OCI-LY7 (cell line): ENCODE measurements at regions of chr3 and their contacts with region 1.

Region 1: GRCh38 chr3:42129014-42129953 is 38.1 kb downstream of the TRAK1 start:
- DNase-seq: peak; percentile 66
- H3K4me3 ChIP-seq: peak overlapping the region; percentile 58
- H3K27ac ChIP-seq: peak overlapping the region; percentile 94
- H3K4me1 ChIP-seq: peaks cover 57% of the 10 kb centered on the region
- CTCF ChIP-seq: no peak

Region 2: DNA sequence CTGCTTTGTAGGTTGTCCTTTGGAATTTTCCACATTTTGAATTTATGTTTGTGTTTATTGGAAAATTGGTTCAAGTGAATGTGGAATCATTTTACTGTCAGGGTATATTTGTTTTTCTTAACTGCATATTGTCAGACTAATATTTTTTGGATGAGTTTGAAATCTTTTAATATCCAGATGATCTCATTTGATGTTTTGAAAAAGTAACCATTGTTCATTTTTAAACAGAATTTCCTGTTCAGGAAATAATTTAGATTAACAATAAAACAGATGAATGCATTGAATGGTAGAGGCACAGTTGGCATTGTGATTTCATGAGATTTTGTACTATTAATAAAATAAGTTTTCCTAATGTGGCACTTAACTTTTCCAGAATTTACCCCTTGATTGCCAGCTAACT is 22.6 kb before region 1 on chr3:
- CTCF ChIA-PET with region 1: no interaction called
- POLR2A ChIA-PET with region 1: no interaction called
- intact Hi-C with region 1: no loop called
- DNase-seq: no peak
- H3K4me3 ChIP-seq: no peak overlapping the region
- H3K27ac ChIP-seq: no peak overlapping the region
- H3K4me1 ChIP-seq: no peaks in the 10 kb centered on the region
- CTCF ChIP-seq: no peak

Region 3: GRCh38 chr3:42118762-42119361 is 10.4 kb before region 1 on chr3:
- CTCF ChIA-PET with region 1: interaction called, 4 read pairs
- POLR2A ChIA-PET with region 1: interaction called, 11 read pairs
- intact Hi-C with region 1: no loop called
- DNase-seq: peak; percentile 83
- H3K4me3 ChIP-seq: no peak overlapping the region
- H3K27ac ChIP-seq: peak overlapping the region; percentile 22
- H3K4me1 ChIP-seq: peaks cover 58% of the 10 kb centered on the region
- CTCF ChIP-seq: peak; percentile 89

Region 4: GRCh38 chr3:42173307-42173706 is 44.0 kb after region 1 on chr3:
- CTCF ChIA-PET with region 1: no interaction called
- POLR2A ChIA-PET with region 1: interaction called, 18 read pairs
- intact Hi-C with region 1: loop called (anchors 5 kb)
- DNase-seq: peak; percentile 45
- H3K4me3 ChIP-seq: peak overlapping the region; percentile 25
- H3K27ac ChIP-seq: peak overlapping the region; percentile 99
- H3K4me1 ChIP-seq: peaks cover 95% of the 10 kb centered on the region
- CTCF ChIP-seq: no peak

Region 5: GRCh38 chr3:42179110-42179725 is 49.9 kb after region 1 on chr3:
- CTCF ChIA-PET with region 1: no interaction called
- POLR2A ChIA-PET with region 1: interaction called, 18 read pairs
- intact Hi-C with region 1: loop called (anchors 5 kb)
- DNase-seq: no peak
- H3K4me3 ChIP-seq: no peak overlapping the region
- H3K27ac ChIP-seq: peak overlapping the region; percentile 10
- H3K4me1 ChIP-seq: peaks cover 68% of the 10 kb centered on the region
- CTCF ChIP-seq: no peak

Region 6: GRCh38 chr3:42195879-42196330 is 66.6 kb after region 1 on chr3:
- CTCF ChIA-PET with region 1: interaction called, 8 read pairs
- POLR2A ChIA-PET with region 1: interaction called, 16 read pairs
- intact Hi-C with region 1: loop called (anchors 1 kb)
- DNase-seq: peak; percentile 73
- H3K4me3 ChIP-seq: peak overlapping the region; percentile 53
- H3K27ac ChIP-seq: peak overlapping the region; percentile 92
- H3K4me1 ChIP-seq: peaks cover 73% of the 10 kb centered on the region
- CTCF ChIP-seq: no peak

Region 7: GRCh38 chr3:42443819-42444436 is 314.6 kb after region 1 on chr3:
- CTCF ChIA-PET with region 1: no interaction called
- POLR2A ChIA-PET with region 1: no interaction called
- intact Hi-C with region 1: loop called (anchors 5 kb)
- DNase-seq: peak; percentile 77
- H3K4me3 ChIP-seq: no peak overlapping the region
- H3K27ac ChIP-seq: no peak overlapping the region
- H3K4me1 ChIP-seq: no peaks in the 10 kb centered on the region
- CTCF ChIP-seq: peak; percentile 99